Right ventricle myocardium superior (tissue), 1 donor: ENCODE measurements at regions of chr17 and their contacts with region 1.

Region 1: GRCh38 chr17:77963441-77963840 is 4.9 kb downstream of the TNRC6C start:
- DNase-seq: no peak
- ATAC-seq: peak; percentile 76

Region 2: GRCh38 chr17:77602062-77602746 is 361.2 kb before region 1 on chr17:
- intact Hi-C with region 1: loop called (anchors 5 kb)
- DNase-seq: peak; percentile 81
- ATAC-seq: peak; percentile 94

Region 3: GRCh38 chr17:77909236-77909635 is 54.2 kb before region 1 on chr17:
- intact Hi-C with region 1: no loop called
- DNase-seq: peak; percentile 76
- ATAC-seq: peak; percentile 79

Region 4: GRCh38 chr17:77999413-78000173 is 36.2 kb after region 1 on chr17:
- intact Hi-C with region 1: loop called (anchors 5 kb)
- DNase-seq: no peak
- ATAC-seq: no peak